ENCODE measurements at regions of chr12 and their contacts with region 1.

Region 1: DNA sequence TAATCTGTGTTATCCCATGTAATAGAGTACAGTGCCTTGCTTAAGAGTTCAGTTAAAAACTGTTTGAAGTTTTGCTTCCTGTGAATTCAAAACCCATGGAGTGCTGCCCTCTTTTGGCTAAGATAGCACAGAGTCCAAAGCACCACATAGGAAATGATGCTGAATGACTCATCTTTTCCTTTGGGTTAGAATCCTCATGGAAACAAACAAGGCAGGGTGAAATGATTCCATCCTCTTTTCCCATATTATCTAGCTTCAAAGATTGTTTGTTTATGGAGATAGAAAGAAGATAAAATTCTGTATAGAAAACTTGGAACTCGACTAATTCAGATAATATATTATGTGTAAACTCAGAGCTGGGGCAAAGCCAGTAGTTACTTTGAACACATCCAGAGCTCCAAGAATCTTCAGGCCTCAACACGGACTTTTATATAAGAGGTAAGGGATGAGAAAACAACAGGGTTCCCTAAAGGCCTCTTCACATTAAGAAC is 87.4 kb downstream of the OTOGL start:
- DNase-seq: no peak
- H3K4me3 ChIP-seq: peak overlapping the region in 1 of 4 donors; percentile 14
- H3K27ac ChIP-seq: peak overlapping the region; percentile 75 to 89 (median 87)
- H3K4me1 ChIP-seq: peaks cover 13 to 41% (median 37%) of the 10 kb centered on the region in 4 donors
- H3K27me3 ChIP-seq: no peaks in the 10 kb centered on the region
- CTCF ChIP-seq: peak; percentile 78 to 83 (median 81)
- EP300 ChIP-seq: peak; percentile 16
- POLR2A ChIP-seq: no peak

Region 2: GRCh38 chr12:79555028-79555930 is 631.5 kb before region 1 on chr12:
- intact Hi-C with region 1: loop called (anchors 10 kb)
- DNase-seq: no peak
- H3K4me3 ChIP-seq: no peak overlapping the region
- H3K27ac ChIP-seq: no peak overlapping the region
- H3K4me1 ChIP-seq: peaks cover 8 to 52% (median 44%) of the 10 kb centered on the region in 4 donors
- H3K27me3 ChIP-seq: no peaks in the 10 kb centered on the region
- CTCF ChIP-seq: peak; percentile 47 to 59 (median 52)
- EP300 ChIP-seq: no peak
- POLR2A ChIP-seq: no peak

Region 3: DNA sequence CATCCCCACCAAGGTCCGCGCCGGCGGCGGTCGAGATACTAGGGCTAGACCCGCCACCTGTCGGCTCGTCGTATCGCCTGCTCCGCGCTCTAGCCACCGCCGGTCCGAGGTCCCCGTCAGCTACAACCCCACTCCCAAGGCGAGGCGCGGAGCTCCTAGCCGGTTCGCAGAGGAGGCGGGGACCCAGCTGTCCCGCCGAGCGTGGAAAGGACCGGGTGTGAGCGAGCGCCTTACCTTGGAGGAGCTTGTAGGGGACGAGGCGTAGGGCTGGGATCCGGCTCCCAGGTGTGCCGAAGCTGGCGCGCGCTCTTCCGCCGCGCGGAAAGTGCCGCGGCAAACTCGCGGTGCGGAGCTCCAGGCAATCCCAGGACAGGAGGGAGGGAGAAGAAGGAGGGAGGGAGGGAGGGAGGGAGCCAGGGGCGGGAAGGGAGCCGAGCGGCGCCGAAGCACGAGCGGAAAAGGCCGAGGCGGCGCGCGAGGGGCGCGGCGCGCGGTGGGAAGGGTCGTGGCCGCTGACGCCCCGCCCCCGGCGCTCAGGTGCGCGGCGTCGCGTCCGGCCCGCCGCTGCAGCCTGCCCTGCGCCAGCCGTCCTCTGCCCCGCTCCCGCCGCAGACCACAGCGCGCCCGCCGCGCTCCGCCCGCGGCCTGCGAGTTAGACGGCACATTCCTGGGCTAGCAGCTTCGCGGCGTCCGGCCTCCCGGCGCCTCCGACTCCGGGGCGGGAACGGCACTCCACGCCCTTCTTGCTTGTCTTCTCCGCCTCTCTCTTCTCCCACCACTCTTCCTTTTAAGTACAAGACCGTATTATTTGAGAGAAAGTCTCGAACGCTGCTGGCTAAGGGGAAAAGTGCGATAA is 495.9 kb before region 1 on chr12 and contains the start of gene PAWR:
- intact Hi-C with region 1: loop called (anchors 5 kb)
- DNase-seq: no peak
- H3K4me3 ChIP-seq: peak within 1 kb of the TSS; percentile 77 to 97 (median 85)
- H3K27ac ChIP-seq: peak within 1 kb of the TSS; percentile 85 to 94 (median 93)
- H3K4me1 ChIP-seq: peaks cover 0 to 42% (median 32%) of the 10 kb centered on the region in 4 donors
- H3K27me3 ChIP-seq: no peaks in the 10 kb centered on the region
- CTCF ChIP-seq: peak; percentile 24 to 32 (median 29)
- EP300 ChIP-seq: no peak
- POLR2A ChIP-seq: no peak
- total RNA-seq, gene PAWR: 63.1 to 127 (median 97.9) TPM

Region 4: DNA sequence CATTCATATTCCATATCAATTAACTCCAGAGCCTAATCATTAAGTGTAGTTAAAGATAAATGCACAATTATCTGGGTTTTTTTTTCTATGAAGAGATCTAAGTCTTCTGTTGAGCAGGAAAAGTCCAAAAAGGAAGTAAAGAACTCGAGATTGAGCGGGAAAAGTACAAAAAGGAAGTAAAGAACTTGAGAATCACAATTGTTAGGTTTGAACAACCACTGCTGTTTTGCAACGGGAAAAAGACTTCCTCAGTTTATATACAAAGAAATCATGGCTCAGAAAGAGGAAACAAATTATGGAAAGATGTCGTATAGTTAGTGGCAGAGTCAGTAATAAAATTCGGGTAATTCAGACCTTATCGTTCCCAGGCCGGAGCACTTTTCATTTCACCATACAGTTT is 315.2 kb before region 1 on chr12:
- intact Hi-C with region 1: no loop called
- DNase-seq: no peak
- H3K4me3 ChIP-seq: no peak overlapping the region
- H3K27ac ChIP-seq: peak overlapping the region in 2 of 4 donors; percentile 11 to 45
- H3K4me1 ChIP-seq: peaks cover 10 to 87% (median 77%) of the 10 kb centered on the region in 4 donors
- H3K27me3 ChIP-seq: no peaks in the 10 kb centered on the region
- CTCF ChIP-seq: no peak
- EP300 ChIP-seq: no peak
- POLR2A ChIP-seq: no peak

Region 5: GRCh38 chr12:79886917-79887519 is 299.8 kb before region 1 on chr12:
- intact Hi-C with region 1: loop called (anchors 10 kb)
- DNase-seq: no peak
- H3K4me3 ChIP-seq: no peak overlapping the region
- H3K27ac ChIP-seq: peak overlapping the region in 2 of 4 donors; percentile 15 to 16
- H3K4me1 ChIP-seq: peaks cover 44 to 99% (median 94%) of the 10 kb centered on the region in 4 donors
- H3K27me3 ChIP-seq: no peaks in the 10 kb centered on the region
- CTCF ChIP-seq: peak; percentile 35 to 58 (median 57)
- EP300 ChIP-seq: no peak
- POLR2A ChIP-seq: no peak

Region 6: GRCh38 chr12:79935021-79935623 is 251.7 kb before region 1 on chr12 and contains the start of gene PPP1R12A:
- intact Hi-C with region 1: loop called (anchors 5 kb)
- DNase-seq: peak; percentile 98
- H3K4me3 ChIP-seq: peak within 1 kb of the TSS; percentile 78 to 99 (median 88)
- H3K27ac ChIP-seq: peak within 1 kb of the TSS; percentile 97 to 98 (median 98)
- H3K4me1 ChIP-seq: peaks cover 16 to 44% (median 31%) of the 10 kb centered on the region in 4 donors
- H3K27me3 ChIP-seq: no peaks in the 10 kb centered on the region
- CTCF ChIP-seq: peak; percentile 1 to 25 (median 12)
- EP300 ChIP-seq: no peak
- POLR2A ChIP-seq: peak; percentile 92
- total RNA-seq, gene PPP1R12A: 441 to 691 (median 542) TPM

Region 7: DNA sequence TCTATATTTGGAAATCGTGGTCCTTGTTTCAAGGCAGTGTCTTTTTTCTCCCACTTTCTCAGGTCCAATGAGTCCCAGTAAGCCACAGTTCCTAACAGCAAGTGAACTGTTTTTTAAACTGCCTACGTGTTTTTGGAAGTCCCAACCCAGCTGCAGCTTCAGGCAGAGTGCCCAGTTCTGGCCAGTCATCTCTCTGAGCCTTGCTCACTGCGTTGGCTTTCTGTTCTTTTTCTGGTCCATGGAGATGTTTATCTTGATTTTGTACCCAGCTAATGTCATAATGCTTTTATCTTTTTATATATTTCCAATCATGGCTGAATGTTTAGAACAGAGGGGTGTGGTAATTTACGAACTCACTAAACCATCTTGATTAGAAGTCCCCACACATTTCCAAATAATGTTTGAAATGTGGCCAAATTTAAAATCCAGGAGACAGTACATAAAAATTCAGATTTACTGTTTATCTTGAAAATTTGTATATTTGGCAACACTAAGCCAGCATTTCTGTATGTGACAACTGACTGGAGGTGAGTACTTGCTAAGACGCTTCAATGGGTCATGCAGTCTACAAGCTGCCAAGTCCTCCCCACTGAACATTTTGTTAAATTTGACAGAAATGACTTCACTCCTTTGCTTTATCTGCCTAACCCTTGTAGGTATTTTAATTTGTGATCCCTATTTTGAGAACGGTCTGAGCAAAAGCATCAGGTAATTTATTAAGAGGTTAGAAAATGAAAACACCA is 133.6 kb before region 1 on chr12:
- intact Hi-C with region 1: loop called (anchors 5 kb)
- DNase-seq: peak; percentile 93
- H3K4me3 ChIP-seq: peak overlapping the region in 2 of 4 donors; percentile 7 to 10
- H3K27ac ChIP-seq: peak overlapping the region; percentile 76 to 82 (median 80)
- H3K4me1 ChIP-seq: peaks cover 5 to 37% (median 34%) of the 10 kb centered on the region in 4 donors
- H3K27me3 ChIP-seq: no peaks in the 10 kb centered on the region
- CTCF ChIP-seq: no peak
- EP300 ChIP-seq: no peak
- POLR2A ChIP-seq: no peak

Region 8: DNA sequence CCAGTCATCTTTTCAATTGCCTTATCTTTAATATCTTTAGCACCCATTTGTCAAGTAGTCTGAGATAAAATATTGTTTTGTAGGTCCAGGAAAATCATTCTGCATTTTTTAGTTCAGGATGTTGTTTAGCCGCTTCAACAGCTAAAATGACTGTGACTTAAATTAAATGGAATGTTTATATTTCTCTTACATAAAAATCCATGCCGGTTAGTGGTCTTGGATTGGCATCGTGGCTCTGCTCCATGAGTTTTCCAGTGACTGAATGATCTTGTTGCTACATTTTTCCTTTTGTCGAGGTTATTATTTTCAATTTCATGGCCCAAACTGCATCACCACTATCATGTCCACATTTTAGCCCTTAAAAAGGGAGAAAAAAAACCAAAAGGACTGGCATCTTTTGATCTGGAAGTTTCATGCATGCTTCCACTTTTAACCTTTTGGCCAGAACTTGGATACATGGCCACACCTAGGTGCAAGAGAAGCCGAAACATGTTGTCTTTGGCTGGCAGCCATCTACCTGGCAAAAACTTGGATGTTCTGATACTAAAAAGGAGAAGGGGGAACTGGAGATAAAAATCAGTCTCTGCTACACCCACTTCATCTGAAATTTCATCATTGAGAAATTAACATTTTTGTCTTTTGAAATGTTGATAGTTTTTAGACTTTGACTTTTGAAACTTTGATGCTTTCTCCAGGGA is 55.0 kb after region 1 on chr12:
- intact Hi-C with region 1: no loop called
- DNase-seq: no peak
- H3K4me3 ChIP-seq: no peak overlapping the region
- H3K27ac ChIP-seq: no peak overlapping the region
- H3K4me1 ChIP-seq: peaks cover 0 to 10% (median 5%) of the 10 kb centered on the region in 4 donors
- H3K27me3 ChIP-seq: no peaks in the 10 kb centered on the region
- CTCF ChIP-seq: no peak
- EP300 ChIP-seq: no peak
- POLR2A ChIP-seq: no peak